Activated T-helper 1 cell treated with anti-CD3 and anti-CD28 coated beads, Interleukin-12 subunit alpha, Interleukin-12 subunit beta, Interleukin-2, Interleukin-4 antibody, amounts not matched to agents 30 ng/mL and 10 ng/mL and 1 ng/mL, durations not matched to agents 14 hours and 24 hours and 36 hours (primary cell): ENCODE measurements at regions of chr2 and their contacts with region 1.

Region 1: GRCh38 chr2:120174963-120175581 is 48.1 kb downstream of the TMEM185B start:
- DNase-seq: peak; percentile 18
- H3K4me3 Mint-ChIP-seq: no peak overlapping the region
- H3K27ac Mint-ChIP-seq: no peak overlapping the region
- H3K4me1 Mint-ChIP-seq: peaks cover 47% of the 10 kb centered on the region
- H3K27me3 Mint-ChIP-seq: peaks cover 7% of the 10 kb centered on the region

Region 2: DNA sequence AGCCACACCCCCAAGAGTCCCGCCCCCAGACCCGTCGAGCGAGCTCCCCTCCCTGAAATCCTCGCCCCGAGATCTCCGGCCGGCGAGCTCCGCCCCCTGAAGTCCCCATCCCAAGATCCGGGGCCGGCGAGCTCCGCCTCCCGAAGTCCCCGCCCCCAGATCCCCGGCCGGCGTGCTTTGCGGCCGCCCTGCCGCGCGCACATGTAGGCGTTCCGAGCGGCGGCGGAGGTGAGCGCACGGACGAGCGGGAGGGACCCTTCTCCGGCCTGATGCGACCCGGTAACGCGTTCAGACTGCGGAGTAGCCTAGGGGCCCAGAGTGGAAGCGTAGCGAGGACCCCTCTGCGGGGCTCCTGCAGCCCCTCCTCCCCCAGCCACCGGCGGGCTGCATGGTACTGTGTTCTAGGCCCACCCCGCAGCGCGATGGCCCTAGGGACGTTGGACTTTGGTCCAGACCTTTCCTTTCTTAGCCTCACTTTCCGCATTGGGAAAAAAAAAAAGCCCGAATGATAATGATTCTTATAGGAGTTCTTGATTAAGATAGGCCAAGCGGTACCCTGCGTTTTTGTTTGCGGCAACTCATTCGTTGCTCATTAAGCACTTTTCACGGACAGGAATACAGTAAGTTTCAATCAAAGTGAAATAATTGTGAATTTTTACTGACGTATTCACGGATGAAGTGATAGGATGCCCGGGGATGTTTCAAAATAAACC is 495.9 kb before region 1 on chr2 and contains the start of gene TMEM177:
- intact Hi-C with region 1: loop called (anchors 1 kb)
- DNase-seq: peak; percentile 90
- H3K4me3 Mint-ChIP-seq: peak within 1 kb of the TSS; percentile 96
- H3K27ac Mint-ChIP-seq: peak within 1 kb of the TSS; percentile 85
- H3K4me1 Mint-ChIP-seq: peaks cover 25% of the 10 kb centered on the region
- H3K27me3 Mint-ChIP-seq: peaks cover 4% of the 10 kb centered on the region
- total RNA-seq, gene TMEM177: 16.6 and 17.4 TPM in 2 replicates

Region 3: DNA sequence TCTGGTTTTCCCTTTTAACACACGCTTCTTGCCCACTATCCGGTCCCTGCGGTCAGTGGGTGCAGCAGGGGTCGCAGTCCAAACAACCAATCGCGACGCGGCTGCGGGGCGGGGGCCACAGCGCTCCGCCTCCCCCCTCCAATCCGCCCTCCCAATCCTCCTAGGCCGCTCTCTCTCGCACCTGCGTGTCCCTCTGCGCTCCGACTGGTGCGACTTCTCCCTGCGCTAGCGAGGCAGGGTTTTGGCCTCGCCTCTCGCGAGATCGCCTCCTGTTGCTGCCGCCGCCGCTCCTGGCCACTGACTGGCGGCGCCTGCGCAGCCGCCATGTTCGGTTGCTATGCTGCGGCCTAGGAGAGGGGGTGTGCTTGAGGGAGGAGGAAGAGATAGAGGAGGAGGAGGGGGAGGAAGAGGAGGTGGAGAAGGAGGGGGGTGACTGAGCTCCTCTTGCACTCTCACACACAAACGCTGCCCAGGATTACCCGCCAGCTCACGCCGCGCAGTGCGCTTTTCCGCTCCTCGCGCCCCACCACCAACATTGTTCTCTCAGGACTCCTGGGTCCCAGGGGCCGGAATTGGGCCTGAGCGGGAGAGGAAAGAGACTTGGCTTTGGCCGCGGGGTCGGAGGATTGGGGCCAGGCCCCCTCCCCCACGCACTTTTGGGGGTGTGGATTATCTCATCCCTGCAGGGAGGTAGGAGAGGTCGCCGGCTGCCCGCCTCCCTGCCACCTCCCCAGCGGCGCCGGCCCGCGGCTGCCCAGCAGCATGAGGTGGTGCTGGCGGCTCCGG is 415.4 kb before region 1 on chr2 and contains the start of gene PTPN4:
- intact Hi-C with region 1: loop called (anchors 1 kb)
- DNase-seq: peak; percentile 95
- H3K4me3 Mint-ChIP-seq: peak within 1 kb of the TSS; percentile 90
- H3K27ac Mint-ChIP-seq: peak within 1 kb of the TSS; percentile 94
- H3K4me1 Mint-ChIP-seq: peaks cover 53% of the 10 kb centered on the region
- H3K27me3 Mint-ChIP-seq: peaks cover 3% of the 10 kb centered on the region
- total RNA-seq, gene PTPN4: 24.5 and 28.3 TPM in 2 replicates

Region 4: DNA sequence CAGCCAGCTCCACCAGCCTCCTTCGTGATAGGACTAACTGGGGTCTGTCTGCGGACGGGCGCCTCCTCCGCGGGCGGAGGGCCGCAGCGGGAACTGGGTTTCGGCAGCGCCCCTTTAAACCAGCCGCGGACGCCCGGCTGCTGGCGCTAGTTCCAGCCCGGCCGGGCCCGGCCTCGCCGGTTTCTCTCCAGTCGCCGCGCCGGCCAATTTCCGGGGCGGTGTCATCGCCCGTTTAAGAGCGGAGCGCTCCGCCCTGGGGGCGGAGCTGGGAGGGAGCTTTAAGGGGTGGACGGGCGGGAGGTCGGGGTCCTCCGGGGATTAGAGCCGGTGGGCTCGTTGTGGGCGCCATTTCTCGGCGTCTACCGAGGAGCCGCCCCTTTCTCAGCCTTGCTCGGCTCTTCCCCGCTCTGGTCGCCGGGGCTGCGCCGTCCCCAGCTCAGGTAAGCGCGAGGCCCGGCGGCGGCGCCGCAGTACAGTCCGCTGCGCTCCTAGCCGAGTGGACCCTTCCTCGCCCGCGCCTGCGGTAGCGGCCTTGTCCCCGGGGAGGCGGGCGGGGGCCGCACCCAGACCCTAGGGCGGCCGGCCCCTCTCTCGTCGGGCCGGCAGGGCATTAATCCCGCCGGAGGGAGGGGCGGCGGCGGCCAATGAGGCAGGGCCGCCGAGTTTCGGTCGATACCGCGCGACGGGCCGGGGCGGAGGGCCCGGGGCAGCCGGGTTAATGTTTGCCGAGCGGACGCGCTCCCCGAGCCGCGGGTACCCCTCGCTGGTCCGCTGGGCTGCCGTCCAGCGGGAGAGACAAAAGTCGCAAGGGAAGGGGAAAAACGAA is 162.1 kb before region 1 on chr2 and contains the start of gene EPB41L5:
- intact Hi-C with region 1: loop called (anchors 1 kb)
- DNase-seq: peak; percentile 75
- H3K4me3 Mint-ChIP-seq: peak within 1 kb of the TSS; percentile 78
- H3K27ac Mint-ChIP-seq: no peak within 1 kb of the TSS
- H3K4me1 Mint-ChIP-seq: peaks cover 7% of the 10 kb centered on the region
- H3K27me3 Mint-ChIP-seq: peaks cover 11% of the 10 kb centered on the region
- total RNA-seq, gene EPB41L5: 1.2 TPM in 2 replicates

Region 5: GRCh38 chr2:120231974-120232635 is 57.0 kb after region 1 on chr2:
- intact Hi-C with region 1: loop called (anchors 2 kb)
- DNase-seq: peak; percentile 81
- H3K4me3 Mint-ChIP-seq: peak overlapping the region; percentile 91
- H3K27ac Mint-ChIP-seq: peak overlapping the region; percentile 98
- H3K4me1 Mint-ChIP-seq: peaks cover 59% of the 10 kb centered on the region
- H3K27me3 Mint-ChIP-seq: no peaks in the 10 kb centered on the region

Region 6: DNA sequence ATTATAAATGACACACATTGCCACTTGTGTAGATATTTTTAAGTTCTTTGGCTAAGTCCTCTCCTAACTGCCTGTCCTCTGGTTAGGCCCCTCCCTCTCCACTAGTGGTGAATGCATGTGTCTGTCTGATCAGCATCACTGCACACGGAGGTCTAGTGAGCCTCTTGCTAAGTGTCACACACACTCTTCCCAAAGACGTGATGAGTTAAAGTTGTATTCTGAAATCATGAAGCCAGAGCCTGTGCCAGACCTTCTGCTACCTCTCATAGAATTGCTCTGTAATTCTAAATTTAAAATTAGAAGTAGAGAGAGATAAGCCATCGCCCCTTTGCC is 118.9 kb after region 1 on chr2:
- intact Hi-C with region 1: no loop called
- DNase-seq: no peak
- H3K4me3 Mint-ChIP-seq: no peak overlapping the region
- H3K27ac Mint-ChIP-seq: peak overlapping the region; percentile 8
- H3K4me1 Mint-ChIP-seq: peaks cover 54% of the 10 kb centered on the region
- H3K27me3 Mint-ChIP-seq: no peaks in the 10 kb centered on the region

Region 7: GRCh38 chr2:120330946-120331822 is 156.1 kb after region 1 on chr2:
- intact Hi-C with region 1: no loop called
- DNase-seq: no peak
- H3K4me3 Mint-ChIP-seq: no peak overlapping the region
- H3K27ac Mint-ChIP-seq: no peak overlapping the region
- H3K4me1 Mint-ChIP-seq: no peaks in the 10 kb centered on the region
- H3K27me3 Mint-ChIP-seq: peaks cover 23% of the 10 kb centered on the region

Region 8: DNA sequence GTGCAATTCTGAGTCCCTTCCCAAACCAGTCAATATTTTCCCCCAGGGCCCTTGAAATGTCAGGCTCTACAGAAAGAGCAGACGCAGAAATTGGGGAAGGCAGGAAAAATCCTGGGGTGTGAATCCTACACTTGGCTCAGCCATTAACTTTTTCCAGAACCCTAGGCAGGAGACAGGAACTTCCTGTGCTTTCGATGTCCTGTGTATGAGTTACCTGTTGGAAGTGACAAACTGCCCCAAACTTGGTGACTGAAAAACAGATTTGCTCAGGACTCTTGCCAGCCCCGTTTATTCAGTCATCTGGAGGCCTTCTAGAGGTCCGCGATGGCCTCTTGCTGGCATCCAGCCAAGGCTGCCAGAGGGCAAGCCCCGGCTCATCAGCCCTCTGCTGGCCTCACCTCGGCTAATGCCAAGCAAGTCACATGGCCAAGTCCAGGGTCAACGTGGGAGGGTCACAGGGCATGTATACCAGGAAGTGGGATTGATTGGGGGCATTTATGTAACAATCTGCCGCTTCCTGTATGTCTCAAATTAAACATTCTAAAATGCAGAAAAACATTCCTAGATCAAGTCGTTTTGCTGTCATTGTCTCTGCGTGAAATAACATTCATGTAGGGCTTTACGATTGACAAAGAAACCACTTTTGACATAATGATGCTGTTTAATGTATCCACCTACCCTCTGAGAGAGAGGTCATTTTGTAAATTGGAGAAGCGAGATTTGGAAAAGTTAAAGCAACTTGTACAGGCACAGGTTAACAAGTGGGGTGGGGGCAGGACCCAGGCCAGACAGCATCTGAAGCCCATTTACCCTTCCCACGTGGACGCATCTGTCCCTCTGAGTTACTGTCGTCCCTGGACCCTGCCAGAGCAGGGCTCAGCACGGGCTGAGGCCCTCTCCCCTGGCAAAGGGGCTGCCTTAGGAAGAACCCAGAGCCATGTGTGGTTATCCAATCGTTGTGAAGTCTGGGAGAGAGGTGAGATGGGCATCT is 350.3 kb after region 1 on chr2:
- intact Hi-C with region 1: no loop called
- DNase-seq: no peak
- H3K4me3 Mint-ChIP-seq: no peak overlapping the region
- H3K27ac Mint-ChIP-seq: no peak overlapping the region
- H3K4me1 Mint-ChIP-seq: no peaks in the 10 kb centered on the region
- H3K27me3 Mint-ChIP-seq: peaks cover 13% of the 10 kb centered on the region